ENCODE measurements at regions of chr14 and their contacts with region 1.

Region 1: GRCh38 chr14:61252369-61253063 is 28.6 kb downstream of the TMEM30B start:
- DNase-seq: peak; percentile 98
- ATAC-seq: peak; percentile 93
- H3K4me3 ChIP-seq: 0 out of 2 replicates have a peak overlapping the region, but pooled peaks have one; percentile 5
- H3K27ac ChIP-seq: peak overlapping the region; percentile 80
- H3K4me1 ChIP-seq: peaks cover 27% of the 10 kb centered on the region
- H3K27me3 ChIP-seq: no peaks in the 10 kb centered on the region
- CTCF ChIP-seq: peak; percentile 99

Region 2: GRCh38 chr14:60622917-60623257 is 629.6 kb before region 1 on chr14:
- CTCF ChIA-PET with region 1: interaction called, 24 read pairs
- POLR2A ChIA-PET with region 1: interaction called, 3 read pairs
- intact Hi-C with region 1: loop called (anchors 1 kb)
- DNase-seq: no peak
- ATAC-seq: no peak
- H3K4me3 ChIP-seq: no peak overlapping the region
- H3K27ac ChIP-seq: no peak overlapping the region
- H3K4me1 ChIP-seq: peaks cover 10% of the 10 kb centered on the region
- H3K27me3 ChIP-seq: no peaks in the 10 kb centered on the region
- CTCF ChIP-seq: no peak

Region 3: GRCh38 chr14:60757617-60758016 is 494.9 kb before region 1 on chr14:
- CTCF ChIA-PET with region 1: interaction called, 5 read pairs
- POLR2A ChIA-PET with region 1: no interaction called
- intact Hi-C with region 1: loop called (anchors 1 kb)
- DNase-seq: peak; percentile 98
- ATAC-seq: peak; percentile 81
- H3K4me3 ChIP-seq: peak overlapping the region; percentile 41
- H3K27ac ChIP-seq: peak overlapping the region; percentile 78
- H3K4me1 ChIP-seq: peaks cover 59% of the 10 kb centered on the region
- H3K27me3 ChIP-seq: no peaks in the 10 kb centered on the region
- CTCF ChIP-seq: no peak

Region 4: DNA sequence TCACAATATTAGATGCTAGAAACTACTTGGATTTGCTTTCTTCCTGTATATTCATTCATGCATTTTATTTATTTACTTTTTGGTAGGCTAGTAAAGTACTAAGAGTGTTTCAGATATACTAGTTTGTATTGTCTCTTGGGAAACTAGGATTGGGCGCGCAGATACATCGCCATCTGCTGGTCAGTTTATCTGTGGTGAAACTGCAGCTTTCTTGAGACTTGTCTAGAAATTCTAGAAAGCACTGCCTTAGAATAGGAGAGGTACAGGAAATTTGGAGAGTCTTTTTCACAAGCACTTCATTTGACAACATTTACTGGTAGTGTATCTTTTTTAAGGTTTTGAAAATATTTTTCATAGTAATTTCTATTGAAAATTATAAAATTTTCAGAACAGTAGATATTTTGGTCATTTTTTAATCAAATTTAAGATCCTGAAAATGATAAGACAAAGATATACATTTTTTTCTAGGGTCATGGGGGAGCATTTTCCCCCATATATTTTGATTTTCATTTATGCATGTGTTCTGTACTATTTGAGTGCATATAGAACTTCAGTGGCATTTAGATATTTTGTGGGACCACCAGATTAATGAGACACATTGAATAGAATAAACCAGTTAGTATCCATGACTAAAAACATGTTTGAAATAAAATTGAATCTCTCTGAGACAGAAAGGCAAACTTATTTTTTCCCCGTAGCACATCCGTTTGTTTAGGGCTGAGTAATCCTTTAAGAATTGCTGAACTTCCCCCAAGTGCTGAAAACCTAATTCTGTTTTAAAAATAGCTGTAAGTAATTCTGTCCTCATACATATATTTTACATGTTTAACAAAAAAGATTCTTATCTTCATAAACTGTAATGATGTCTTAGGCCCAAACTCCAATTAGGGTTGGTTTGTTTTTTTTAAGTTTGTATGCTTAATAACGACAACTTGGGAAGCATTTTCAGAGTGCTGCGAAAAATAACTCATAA is 227.0 kb before region 1 on chr14:
- CTCF ChIA-PET with region 1: interaction called, 9 read pairs
- POLR2A ChIA-PET with region 1: no interaction called
- intact Hi-C with region 1: loop called (anchors 1 kb)
- DNase-seq: peak; percentile 96
- ATAC-seq: peak; percentile 89
- H3K4me3 ChIP-seq: peak overlapping the region; percentile 48
- H3K27ac ChIP-seq: peak overlapping the region; percentile 82
- H3K4me1 ChIP-seq: peaks cover 39% of the 10 kb centered on the region
- H3K27me3 ChIP-seq: no peaks in the 10 kb centered on the region
- CTCF ChIP-seq: peak; percentile 99

Region 5: GRCh38 chr14:61188978-61189808 is 63.3 kb before region 1 on chr14:
- CTCF ChIA-PET with region 1: no interaction called
- POLR2A ChIA-PET with region 1: no interaction called
- intact Hi-C with region 1: loop called (anchors 2 kb)
- DNase-seq: peak; percentile 84
- ATAC-seq: peak; percentile 91
- H3K4me3 ChIP-seq: peak overlapping the region; percentile 65
- H3K27ac ChIP-seq: no peak overlapping the region
- H3K4me1 ChIP-seq: peaks cover 16% of the 10 kb centered on the region
- H3K27me3 ChIP-seq: no peaks in the 10 kb centered on the region
- CTCF ChIP-seq: peak; percentile 90

Region 6: DNA sequence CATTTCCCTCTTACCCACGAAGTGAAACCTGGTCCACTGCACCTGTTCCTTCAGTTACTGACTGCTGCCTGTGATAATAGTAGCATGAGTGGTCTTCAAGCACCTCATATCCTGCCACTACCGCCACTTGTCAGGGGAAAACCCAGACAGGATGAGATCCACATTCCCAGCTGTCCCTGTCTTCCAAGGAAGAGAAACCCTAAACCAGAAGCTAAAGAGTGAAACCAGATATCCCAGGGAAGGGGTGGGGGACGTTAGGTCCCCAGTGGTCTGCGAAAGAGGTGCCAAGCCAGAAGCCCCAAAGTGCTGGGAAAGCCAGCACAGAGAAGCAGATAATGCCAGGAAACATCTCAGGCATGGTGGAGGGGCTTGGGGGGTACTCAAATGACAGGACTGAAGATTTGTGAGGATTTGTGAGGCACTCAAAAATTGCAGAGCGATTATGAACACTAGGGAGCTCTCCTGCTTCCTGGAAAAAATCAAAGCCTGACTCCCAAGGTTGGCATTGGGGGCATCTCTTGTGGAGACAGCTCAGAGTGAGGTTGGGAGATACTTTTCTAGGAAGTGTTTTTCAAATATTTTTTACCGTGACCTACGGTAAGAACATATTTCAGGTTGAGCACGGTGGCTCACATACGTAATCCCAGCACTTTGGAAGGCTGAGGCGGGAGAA is 49.3 kb before region 1 on chr14:
- CTCF ChIA-PET with region 1: no interaction called
- POLR2A ChIA-PET with region 1: no interaction called
- intact Hi-C with region 1: no loop called
- DNase-seq: no peak
- ATAC-seq: no peak
- H3K4me3 ChIP-seq: no peak overlapping the region
- H3K27ac ChIP-seq: no peak overlapping the region
- H3K4me1 ChIP-seq: no peaks in the 10 kb centered on the region
- H3K27me3 ChIP-seq: no peaks in the 10 kb centered on the region
- CTCF ChIP-seq: no peak

Region 7: DNA sequence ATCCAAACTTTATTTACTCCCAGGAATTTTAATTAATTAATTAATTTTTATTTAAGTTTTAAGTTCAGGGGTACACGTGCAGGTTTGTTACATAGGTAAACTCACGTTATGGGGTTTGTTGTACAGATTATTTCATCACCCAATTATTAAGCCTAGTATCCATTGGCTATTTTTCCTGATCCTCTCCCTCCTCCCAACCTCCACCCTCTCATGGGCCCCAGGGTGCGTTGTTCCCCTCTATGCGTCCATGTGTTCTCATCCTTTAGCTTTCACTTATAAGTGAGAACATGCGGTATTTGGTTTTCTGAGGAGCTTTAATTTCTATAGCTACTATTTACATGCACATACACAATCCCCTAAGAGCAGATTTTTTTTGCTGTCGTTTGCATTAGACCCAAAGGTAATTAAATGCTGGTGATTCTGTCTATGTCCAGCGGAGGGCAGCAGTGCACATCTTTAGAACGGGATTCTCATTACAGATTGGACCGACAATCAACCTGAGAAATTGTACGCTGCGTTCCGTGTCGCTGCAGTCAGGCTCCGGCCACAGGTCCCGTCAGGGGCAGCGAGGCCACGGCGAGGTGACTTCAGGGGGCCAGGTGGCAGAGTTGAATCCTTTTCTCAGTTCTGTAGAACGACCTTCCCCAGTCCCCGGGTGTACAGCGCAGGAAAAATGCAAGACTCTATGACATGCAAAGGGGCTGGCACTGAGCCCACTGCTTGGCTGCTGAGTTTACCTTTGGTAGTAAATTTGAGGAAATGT is 17.0 kb after region 1 on chr14:
- CTCF ChIA-PET with region 1: no interaction called
- POLR2A ChIA-PET with region 1: no interaction called
- intact Hi-C with region 1: no loop called
- DNase-seq: peak; percentile 98
- ATAC-seq: peak; percentile 71
- H3K4me3 ChIP-seq: peak overlapping the region; percentile 65
- H3K27ac ChIP-seq: no peak overlapping the region
- H3K4me1 ChIP-seq: peaks cover 6% of the 10 kb centered on the region
- H3K27me3 ChIP-seq: no peaks in the 10 kb centered on the region
- CTCF ChIP-seq: peak; percentile 97

Region 8: DNA sequence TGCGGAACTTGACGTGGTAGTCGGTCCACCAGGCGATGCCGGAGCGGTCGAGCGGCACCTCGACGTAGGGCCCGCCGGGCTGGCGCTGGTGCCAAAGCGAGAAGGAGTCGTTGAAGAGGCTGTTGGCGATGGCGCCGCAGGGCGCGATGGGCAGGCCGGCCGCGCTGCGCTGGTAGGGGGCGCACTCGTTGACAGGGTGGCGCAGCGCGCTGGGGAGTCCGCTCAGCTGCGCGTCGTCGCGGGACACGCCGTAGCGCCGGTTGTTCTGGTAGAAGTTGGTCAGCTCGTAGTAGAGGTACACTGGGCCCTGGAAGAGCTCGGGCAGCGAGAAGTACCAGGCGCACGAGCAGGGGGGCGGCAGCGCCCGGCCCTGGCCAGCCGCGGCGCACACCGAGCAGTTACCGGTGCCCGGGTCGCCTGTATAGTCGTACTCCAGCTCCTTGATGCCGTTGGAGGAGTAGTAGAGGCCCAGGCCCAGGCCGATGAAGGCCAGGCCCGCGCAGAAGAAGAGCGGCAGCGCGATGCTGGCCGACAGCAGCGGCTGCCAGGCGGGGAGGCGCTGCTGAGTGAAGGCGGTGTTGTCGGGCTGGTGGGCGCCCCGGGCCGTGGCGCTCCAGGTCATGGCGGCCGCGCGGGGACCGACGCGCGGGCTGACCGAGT is 28.1 kb after region 1 on chr14:
- CTCF ChIA-PET with region 1: interaction called, 10 read pairs
- POLR2A ChIA-PET with region 1: no interaction called
- intact Hi-C with region 1: no loop called
- DNase-seq: peak; percentile 84
- ATAC-seq: peak; percentile 55
- H3K4me3 ChIP-seq: peak overlapping the region; percentile 85
- H3K27ac ChIP-seq: peak overlapping the region; percentile 82
- H3K4me1 ChIP-seq: peaks cover 58% of the 10 kb centered on the region
- H3K27me3 ChIP-seq: no peaks in the 10 kb centered on the region
- CTCF ChIP-seq: peak; percentile 89

Region 9: GRCh38 chr14:62645649-62646048 is 1393.1 kb after region 1 on chr14:
- CTCF ChIA-PET with region 1: no interaction called
- POLR2A ChIA-PET with region 1: no interaction called
- intact Hi-C with region 1: no loop called
- DNase-seq: no peak
- ATAC-seq: no peak; the same call in 1 of the 2 replicates
- H3K4me3 ChIP-seq: no peak overlapping the region
- H3K27ac ChIP-seq: no peak overlapping the region
- H3K4me1 ChIP-seq: no peaks in the 10 kb centered on the region
- H3K27me3 ChIP-seq: peaks cover 35% of the 10 kb centered on the region
- CTCF ChIP-seq: no peak